HCT116 (cell line): ENCODE measurements at regions of chr17 and their contacts with region 1.

Region 1: DNA sequence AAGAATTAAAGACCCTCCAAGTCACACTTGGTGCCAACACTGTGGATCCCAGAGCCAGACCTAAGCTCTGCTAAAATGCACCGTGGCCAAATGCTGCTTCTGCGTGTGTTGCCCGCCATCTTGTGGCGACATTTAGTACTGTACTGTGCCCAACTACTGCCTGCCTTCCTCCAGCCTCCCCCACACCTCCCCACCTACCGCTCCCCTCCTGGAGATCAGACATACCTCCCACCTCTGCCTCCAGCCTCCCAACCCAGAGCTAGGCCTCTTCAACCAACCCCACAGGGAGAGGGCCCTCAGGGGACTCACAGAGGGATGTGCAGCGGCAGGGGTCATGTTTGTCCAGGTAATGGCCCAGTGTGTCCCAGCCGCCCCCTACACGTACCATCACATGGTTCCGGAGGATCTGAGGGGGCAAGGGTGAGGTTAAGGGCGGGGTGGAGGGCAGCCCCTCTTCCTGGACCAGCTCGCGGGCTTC is 5.5 kb downstream of the GAS2L2 start:
- DNase-seq: peak; percentile 64
- ATAC-seq: peak; percentile 94
- H3K4me3 ChIP-seq: no peak overlapping the region
- H3K27ac ChIP-seq: no peak overlapping the region
- H3K4me1 ChIP-seq: no peaks in the 10 kb centered on the region
- H3K27me3 ChIP-seq: peaks cover 4% of the 10 kb centered on the region; the same call in 1 of the 2 replicates
- CTCF ChIP-seq: peak; percentile 56 to 87 (median 77); a peak in 5 of 6 replicates
- POLR2A ChIP-seq: no peak
- RAD21 ChIP-seq: peak; percentile 92

Region 2: GRCh38 chr17:34420254-34420766 is 1327.3 kb before region 1 on chr17:
- CTCF ChIA-PET with region 1: interaction called, 3 read pairs
- POLR2A ChIA-PET with region 1: no interaction called
- RAD21 ChIA-PET with region 1: interaction called in 1 of 2 experiments, 3 read pairs
- intact Hi-C with region 1: loop called (anchors 10 kb)
- DNase-seq: peak; percentile 40
- ATAC-seq: peak; percentile 84
- H3K4me3 ChIP-seq: no peak overlapping the region
- H3K27ac ChIP-seq: no peak overlapping the region
- H3K4me1 ChIP-seq: no peaks in the 10 kb centered on the region
- H3K27me3 ChIP-seq: peaks cover 42% of the 10 kb centered on the region
- CTCF ChIP-seq: peak; percentile 55 to 94 (median 84); a peak in 5 of 6 replicates
- POLR2A ChIP-seq: no peak
- RAD21 ChIP-seq: peak; percentile 80

Region 3: GRCh38 chr17:34998205-34998604 is 749.4 kb before region 1 on chr17:
- CTCF ChIA-PET with region 1: no interaction called
- POLR2A ChIA-PET with region 1: no interaction called
- RAD21 ChIA-PET with region 1: no interaction called
- intact Hi-C with region 1: loop called (anchors 5 kb)
- DNase-seq: peak; percentile 38
- ATAC-seq: peak; percentile 97
- H3K4me3 ChIP-seq: no peak overlapping the region
- H3K27ac ChIP-seq: no peak overlapping the region
- H3K4me1 ChIP-seq: no peaks in the 10 kb centered on the region
- H3K27me3 ChIP-seq: no peaks in the 10 kb centered on the region
- CTCF ChIP-seq: peak; percentile 84 to 93 (median 87)
- POLR2A ChIP-seq: no peak
- RAD21 ChIP-seq: peak; percentile 95

Region 4: GRCh38 chr17:35312790-35313711 is 434.5 kb before region 1 on chr17:
- CTCF ChIA-PET with region 1: interaction called, 5 read pairs
- POLR2A ChIA-PET with region 1: no interaction called
- RAD21 ChIA-PET with region 1: no interaction called
- intact Hi-C with region 1: loop called (anchors 5 kb)
- DNase-seq: peak; percentile 37
- ATAC-seq: peak; percentile 98
- H3K4me3 ChIP-seq: no peak overlapping the region
- H3K27ac ChIP-seq: no peak overlapping the region
- H3K4me1 ChIP-seq: peaks cover 5 to 9% of the 10 kb centered on the region in 2 experiments; a peak in 3 of 4 replicates
- H3K27me3 ChIP-seq: 0 out of 2 replicates have a peak, but pooled peaks cover 9% of the 10 kb centered on the region
- CTCF ChIP-seq: peak; percentile 70 to 83 (median 74)
- POLR2A ChIP-seq: no peak
- RAD21 ChIP-seq: peak; percentile 75

Region 5: GRCh38 chr17:35555695-35556094 is 191.9 kb before region 1 on chr17:
- CTCF ChIA-PET with region 1: interaction called, 6 read pairs
- POLR2A ChIA-PET with region 1: no interaction called
- RAD21 ChIA-PET with region 1: interaction called in 1 of 2 experiments, 5 read pairs
- intact Hi-C with region 1: loop called (anchors 1 kb)
- DNase-seq: no peak
- ATAC-seq: no peak
- H3K4me3 ChIP-seq: no peak overlapping the region
- H3K27ac ChIP-seq: no peak overlapping the region
- H3K4me1 ChIP-seq: no peaks in the 10 kb centered on the region
- H3K27me3 ChIP-seq: peaks cover 20% of the 10 kb centered on the region
- CTCF ChIP-seq: peak; percentile 24 to 36 (median 31); a peak in 4 of 6 replicates
- POLR2A ChIP-seq: no peak
- RAD21 ChIP-seq: peak; percentile 43

Region 6: DNA sequence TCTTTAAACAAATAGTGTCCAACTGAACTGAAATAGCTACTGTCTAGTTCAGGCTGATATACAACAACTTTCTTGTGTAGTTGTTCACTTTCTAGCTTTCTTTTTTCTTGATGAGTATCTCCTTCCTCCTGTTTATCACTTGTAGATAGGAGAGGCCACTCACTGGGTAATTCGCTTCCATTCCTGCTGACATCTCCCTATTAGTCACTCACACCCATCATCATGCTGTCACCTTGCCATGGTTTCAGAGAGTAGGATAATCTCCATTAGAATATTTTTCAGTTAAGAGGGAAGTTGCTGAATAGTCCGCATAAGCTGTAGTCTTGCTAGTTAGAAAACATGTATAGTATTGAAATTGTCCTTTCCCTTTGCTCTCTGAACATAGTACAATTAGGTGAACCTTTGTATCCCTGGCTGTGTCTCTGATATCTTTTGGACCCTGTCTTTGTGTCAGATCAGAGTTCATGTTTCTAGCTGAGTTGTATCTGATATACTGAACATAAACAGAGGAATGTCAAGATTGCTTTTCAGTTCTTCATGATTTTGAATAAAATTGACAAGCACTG is 80.5 kb before region 1 on chr17:
- CTCF ChIA-PET with region 1: no interaction called
- POLR2A ChIA-PET with region 1: no interaction called
- RAD21 ChIA-PET with region 1: no interaction called
- intact Hi-C with region 1: no loop called
- DNase-seq: no peak
- ATAC-seq: no peak
- H3K4me3 ChIP-seq: no peak overlapping the region
- H3K27ac ChIP-seq: no peak overlapping the region
- H3K4me1 ChIP-seq: no peaks in the 10 kb centered on the region
- H3K27me3 ChIP-seq: no peaks in the 10 kb centered on the region
- CTCF ChIP-seq: no peak
- POLR2A ChIP-seq: no peak
- RAD21 ChIP-seq: no peak